ENCODE measurements at regions of chr6 and their contacts with region 1.

Region 1: GRCh38 chr6:16332175-16332542 is 93.8 kb downstream of the GMPR start:
- DNase-seq: peak; percentile 77
- H3K4me3 Mint-ChIP-seq: no peak overlapping the region
- H3K27ac Mint-ChIP-seq: no peak overlapping the region
- H3K4me1 Mint-ChIP-seq: peaks cover 29% of the 10 kb centered on the region
- H3K27me3 Mint-ChIP-seq: no peaks in the 10 kb centered on the region
- CTCF ChIP-seq: peak; percentile 77

Region 2: DNA sequence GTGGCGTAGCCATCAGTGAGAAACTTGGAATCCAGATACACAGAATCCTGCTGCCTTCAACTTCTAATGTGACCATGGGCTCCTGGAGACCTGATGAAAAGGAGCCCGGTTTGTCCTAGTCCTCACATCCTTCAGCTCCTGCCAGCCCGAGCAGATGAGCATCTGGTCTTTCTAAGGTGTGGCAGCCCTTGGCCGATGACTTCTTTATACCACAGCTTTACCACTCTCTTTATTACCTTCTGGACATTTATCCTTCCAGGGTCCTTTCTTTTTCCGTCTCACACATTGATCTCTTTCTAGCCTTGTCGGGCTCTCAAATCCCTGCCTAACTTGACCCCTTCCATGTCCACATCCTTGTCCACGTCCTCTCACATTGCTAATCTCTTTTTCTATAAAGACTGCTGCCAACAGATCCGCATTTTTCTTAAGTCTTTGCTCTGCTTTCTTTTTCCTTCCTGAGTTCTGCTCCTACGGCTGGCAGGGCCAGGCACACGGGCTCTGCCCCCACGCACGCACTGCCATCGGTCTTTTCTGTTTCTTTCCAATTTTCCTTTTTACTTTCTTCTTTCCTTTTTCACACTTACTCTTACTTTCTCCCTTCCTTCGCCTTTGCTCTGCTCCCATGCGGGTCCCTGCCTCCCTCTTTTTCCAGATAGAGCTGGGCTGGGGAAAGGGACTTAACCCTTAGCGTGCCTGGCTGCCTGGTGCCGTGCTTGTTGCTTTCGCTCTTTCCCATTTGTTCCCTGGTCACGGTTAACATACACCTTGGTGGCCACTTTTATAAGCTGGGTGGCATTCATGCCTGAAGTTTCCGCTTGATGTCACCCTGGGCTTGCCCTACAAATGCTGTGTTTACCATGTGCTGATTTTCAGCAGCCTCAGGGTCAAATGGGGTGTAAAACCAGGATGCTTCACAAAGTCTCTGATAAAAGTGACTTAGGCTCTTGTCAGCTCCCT is 103.2 kb before region 1 on chr6:
- CTCF ChIA-PET with region 1: interaction called, 4 read pairs
- POLR2A ChIA-PET with region 1: no interaction called
- intact Hi-C with region 1: loop called (anchors 2 kb)
- DNase-seq: no peak
- H3K4me3 Mint-ChIP-seq: no peak overlapping the region
- H3K27ac Mint-ChIP-seq: no peak overlapping the region
- H3K4me1 Mint-ChIP-seq: no peaks in the 10 kb centered on the region
- H3K27me3 Mint-ChIP-seq: no peaks in the 10 kb centered on the region
- CTCF ChIP-seq: peak; percentile 30

Region 3: GRCh38 chr6:16403831-16404230 is 71.7 kb after region 1 on chr6:
- CTCF ChIA-PET with region 1: interaction called, 27 read pairs
- POLR2A ChIA-PET with region 1: no interaction called
- intact Hi-C with region 1: loop called (anchors 1 kb)
- DNase-seq: no peak
- H3K4me3 Mint-ChIP-seq: no peak overlapping the region
- H3K27ac Mint-ChIP-seq: no peak overlapping the region
- H3K4me1 Mint-ChIP-seq: no peaks in the 10 kb centered on the region
- H3K27me3 Mint-ChIP-seq: no peaks in the 10 kb centered on the region
- CTCF ChIP-seq: peak; percentile 23

Region 4: GRCh38 chr6:16684896-16685554 is 352.9 kb after region 1 on chr6:
- CTCF ChIA-PET with region 1: interaction called, 7 read pairs
- POLR2A ChIA-PET with region 1: interaction called, 10 read pairs
- intact Hi-C with region 1: no loop called
- DNase-seq: peak; percentile 85
- H3K4me3 Mint-ChIP-seq: no peak overlapping the region
- H3K27ac Mint-ChIP-seq: no peak overlapping the region
- H3K4me1 Mint-ChIP-seq: peaks cover 48% of the 10 kb centered on the region
- H3K27me3 Mint-ChIP-seq: no peaks in the 10 kb centered on the region
- CTCF ChIP-seq: no peak

Region 5: DNA sequence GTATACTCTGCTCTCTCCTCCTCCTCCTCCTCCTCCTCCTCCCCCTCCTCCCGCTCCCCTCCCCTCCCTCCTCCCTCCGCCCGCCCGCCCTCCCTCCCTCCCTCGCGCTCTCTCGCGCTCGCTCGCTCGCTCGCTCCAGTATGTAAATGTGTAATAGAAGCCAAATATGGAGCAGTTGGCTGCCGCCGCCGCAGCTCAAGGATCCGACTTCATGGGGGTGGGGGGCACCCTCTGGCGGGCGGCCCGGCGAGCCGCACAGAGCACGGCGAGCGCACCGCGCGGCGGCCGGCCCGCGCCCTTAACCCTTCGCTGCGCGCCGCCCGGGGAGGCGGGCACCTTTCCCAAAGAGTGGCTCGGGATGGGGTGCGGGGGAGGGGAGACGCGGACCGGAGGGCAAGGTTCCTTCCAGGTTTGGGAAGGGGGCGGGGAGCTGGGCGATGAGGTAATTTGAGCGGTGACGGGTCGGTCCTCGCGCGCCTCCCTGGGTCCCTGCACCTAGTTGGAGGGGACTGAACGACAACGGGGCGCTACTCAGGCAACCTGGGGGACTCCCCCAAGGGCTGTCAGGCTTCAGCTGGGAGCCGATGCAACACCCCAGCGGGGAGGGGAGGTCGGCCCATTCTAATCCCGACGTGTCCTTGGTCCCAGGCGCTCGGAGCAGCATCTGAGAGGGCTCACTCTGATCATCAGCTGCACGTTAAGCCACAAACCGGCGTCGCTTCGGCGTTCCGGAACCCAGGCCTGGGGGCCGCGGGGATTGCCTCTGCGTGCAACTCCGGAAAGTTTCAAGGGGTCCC is 429.5 kb after region 1 on chr6:
- CTCF ChIA-PET with region 1: interaction called, 43 read pairs
- POLR2A ChIA-PET with region 1: interaction called, 41 read pairs
- intact Hi-C with region 1: loop called (anchors 1 kb)
- DNase-seq: peak; percentile 83
- H3K4me3 Mint-ChIP-seq: peak overlapping the region; percentile 90
- H3K27ac Mint-ChIP-seq: peak overlapping the region; percentile 77
- H3K4me1 Mint-ChIP-seq: peaks cover 16% of the 10 kb centered on the region
- H3K27me3 Mint-ChIP-seq: no peaks in the 10 kb centered on the region
- CTCF ChIP-seq: peak; percentile 7

Region 6: GRCh38 chr6:17032988-17033634 is 701.0 kb after region 1 on chr6:
- CTCF ChIA-PET with region 1: no interaction called
- POLR2A ChIA-PET with region 1: no interaction called
- intact Hi-C with region 1: loop called (anchors 5 kb)
- DNase-seq: peak; percentile 89
- H3K4me3 Mint-ChIP-seq: peak overlapping the region; percentile 33
- H3K27ac Mint-ChIP-seq: peak overlapping the region; percentile 57
- H3K4me1 Mint-ChIP-seq: peaks cover 13% of the 10 kb centered on the region
- H3K27me3 Mint-ChIP-seq: peaks cover 17% of the 10 kb centered on the region
- CTCF ChIP-seq: no peak

Measured in MCF 10A (cell line).